IMR-90 (cell line): ENCODE measurements at regions of chr12 and their contacts with region 1.

Region 1: GRCh38 chr12:15268927-15269552 is 47.8 kb upstream of the RERG start:
- DNase-seq: peak; percentile 58
- ATAC-seq: peak; percentile 87
- H3K4me3 ChIP-seq: no peak overlapping the region
- H3K27ac ChIP-seq: no peak overlapping the region
- H3K4me1 ChIP-seq: no peaks in the 10 kb centered on the region
- H3K27me3 ChIP-seq: no peaks in the 10 kb centered on the region
- CTCF ChIP-seq: peak; percentile 76
- POLR2A ChIP-seq: no peak
- RAD21 ChIP-seq: peak; percentile 61; the same call in 1 of the 2 replicates

Region 2: DNA sequence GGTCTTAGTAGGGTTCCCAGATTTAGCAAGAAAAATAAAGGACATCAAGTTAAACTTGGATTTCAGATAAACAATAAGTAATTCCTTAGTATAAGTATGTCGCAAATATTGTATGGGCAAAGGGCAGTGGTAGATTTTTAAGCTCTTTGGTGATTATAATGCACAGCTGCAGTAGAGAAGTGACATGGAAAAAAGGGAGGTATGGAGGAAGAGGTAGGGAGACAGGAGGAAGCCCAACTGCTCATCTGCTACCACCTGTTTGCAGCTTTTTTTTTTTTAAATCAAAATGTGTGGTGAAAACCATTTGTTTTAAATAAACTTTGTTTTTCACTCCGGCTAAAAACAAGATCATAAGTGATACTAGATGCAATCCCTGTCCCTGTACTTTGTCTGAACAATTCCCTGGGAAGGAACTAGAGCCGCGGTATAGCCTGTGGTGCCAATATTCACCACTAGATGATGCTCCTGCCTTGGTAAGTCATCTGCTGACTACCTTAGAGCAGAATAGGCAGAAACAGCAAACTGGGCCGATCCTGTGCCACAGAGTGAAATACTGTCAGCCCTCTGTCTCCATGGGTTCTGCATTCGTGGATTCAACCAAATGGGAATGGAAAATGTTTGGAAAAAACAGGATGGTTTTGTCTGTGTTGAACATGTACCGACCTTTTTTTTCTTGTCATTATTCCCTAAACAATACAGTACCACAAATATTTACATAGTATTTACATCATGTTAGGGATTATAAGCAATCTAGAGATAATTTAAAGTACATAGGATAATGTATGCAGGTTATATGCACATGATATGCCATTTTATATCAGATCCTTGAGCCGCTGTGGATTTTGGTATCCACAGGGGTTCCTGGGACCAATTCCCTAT is 639.0 kb before region 1 on chr12:
- CTCF ChIA-PET with region 1: no interaction called
- POLR2A ChIA-PET with region 1: no interaction called
- dilution Hi-C with region 1: no loop called
- in situ Hi-C with region 1: no loop called
- intact Hi-C with region 1: loop called (anchors 1 kb)
- DNase-seq: peak; percentile 62
- ATAC-seq: peak; percentile 100
- H3K4me3 ChIP-seq: no peak overlapping the region
- H3K27ac ChIP-seq: no peak overlapping the region
- H3K4me1 ChIP-seq: no peaks in the 10 kb centered on the region
- H3K27me3 ChIP-seq: no peaks in the 10 kb centered on the region
- CTCF ChIP-seq: peak; percentile 92
- POLR2A ChIP-seq: no peak
- RAD21 ChIP-seq: peak; percentile 88

Region 3: DNA sequence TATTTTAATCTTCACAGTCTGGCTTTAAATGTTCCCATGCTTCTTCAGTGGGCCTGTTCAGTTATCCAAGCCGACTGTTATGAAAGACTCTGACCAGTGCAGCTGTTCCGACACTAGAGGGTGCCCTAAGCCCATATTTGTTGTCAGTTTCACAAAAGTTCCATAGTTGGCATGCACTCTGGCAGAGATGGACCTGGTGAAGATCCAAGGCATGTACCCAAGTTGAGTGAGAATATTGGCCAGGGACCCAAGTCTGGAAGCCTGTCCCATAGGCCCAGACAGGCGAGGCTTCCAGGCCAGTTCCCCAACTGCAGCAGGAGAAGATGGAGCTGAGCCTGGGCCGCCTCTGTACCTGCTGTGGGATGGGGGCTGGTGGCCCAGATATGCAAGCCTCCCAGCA is 545.3 kb before region 1 on chr12:
- CTCF ChIA-PET with region 1: no interaction called
- POLR2A ChIA-PET with region 1: no interaction called
- dilution Hi-C with region 1: no loop called
- in situ Hi-C with region 1: no loop called
- intact Hi-C with region 1: loop called (anchors 1 kb)
- DNase-seq: peak; percentile 58
- ATAC-seq: peak; percentile 80
- H3K4me3 ChIP-seq: no peak overlapping the region
- H3K27ac ChIP-seq: no peak overlapping the region
- H3K4me1 ChIP-seq: no peaks in the 10 kb centered on the region
- H3K27me3 ChIP-seq: no peaks in the 10 kb centered on the region
- CTCF ChIP-seq: peak; percentile 74
- POLR2A ChIP-seq: no peak
- RAD21 ChIP-seq: peak; percentile 78

Region 4: DNA sequence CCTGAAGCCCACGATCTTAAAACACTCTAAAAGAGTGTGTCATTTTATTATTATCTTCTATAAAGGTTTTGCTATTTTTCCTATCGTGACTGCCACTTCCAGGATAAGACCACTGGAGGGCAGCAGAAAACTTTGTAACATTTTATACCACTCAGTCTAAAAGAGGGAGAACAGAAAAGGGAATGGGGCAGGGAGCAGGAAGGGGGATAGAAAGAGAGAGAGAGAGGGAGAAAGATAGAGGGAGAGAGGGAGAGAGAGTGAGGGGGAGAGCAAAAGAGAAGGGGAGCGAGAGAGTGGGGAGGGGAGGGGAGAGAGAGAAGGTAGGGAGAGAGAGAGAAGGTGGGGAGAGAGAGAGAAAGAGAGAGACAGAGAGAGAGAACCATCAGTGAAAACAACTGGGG is 423.7 kb before region 1 on chr12:
- CTCF ChIA-PET with region 1: no interaction called
- POLR2A ChIA-PET with region 1: no interaction called
- dilution Hi-C with region 1: no loop called
- in situ Hi-C with region 1: no loop called
- intact Hi-C with region 1: loop called (anchors 5 kb)
- DNase-seq: peak; percentile 65
- ATAC-seq: peak; percentile 77
- H3K4me3 ChIP-seq: no peak overlapping the region
- H3K27ac ChIP-seq: no peak overlapping the region; the same call in 1 of the 2 replicates
- H3K4me1 ChIP-seq: peaks cover 3% of the 10 kb centered on the region; the same call in 1 of the 2 replicates
- H3K27me3 ChIP-seq: no peaks in the 10 kb centered on the region
- CTCF ChIP-seq: peak; percentile 85
- POLR2A ChIP-seq: no peak
- RAD21 ChIP-seq: peak; percentile 81

Region 5: GRCh38 chr12:15151161-15152120 is 117.6 kb before region 1 on chr12:
- CTCF ChIA-PET with region 1: no interaction called
- POLR2A ChIA-PET with region 1: no interaction called
- dilution Hi-C with region 1: no loop called
- in situ Hi-C with region 1: no loop called
- intact Hi-C with region 1: loop called (anchors 2 kb)
- DNase-seq: no peak
- ATAC-seq: no peak
- H3K4me3 ChIP-seq: no peak overlapping the region
- H3K27ac ChIP-seq: no peak overlapping the region
- H3K4me1 ChIP-seq: no peaks in the 10 kb centered on the region
- H3K27me3 ChIP-seq: no peaks in the 10 kb centered on the region; the same call in 1 of the 2 replicates
- CTCF ChIP-seq: peak; percentile 31
- POLR2A ChIP-seq: no peak
- RAD21 ChIP-seq: no peak

Region 6: GRCh38 chr12:15227004-15227679 is 41.9 kb before region 1 on chr12:
- CTCF ChIA-PET with region 1: interaction called, 4 read pairs
- POLR2A ChIA-PET with region 1: no interaction called
- dilution Hi-C with region 1: no loop called
- in situ Hi-C with region 1: no loop called
- intact Hi-C with region 1: loop called (anchors 2 kb)
- DNase-seq: peak; percentile 33
- ATAC-seq: peak; percentile 81
- H3K4me3 ChIP-seq: no peak overlapping the region
- H3K27ac ChIP-seq: no peak overlapping the region
- H3K4me1 ChIP-seq: no peaks in the 10 kb centered on the region
- H3K27me3 ChIP-seq: peaks cover 2% of the 10 kb centered on the region; the same call in 1 of the 2 replicates
- CTCF ChIP-seq: peak; percentile 49
- POLR2A ChIP-seq: no peak
- RAD21 ChIP-seq: peak; percentile 33

Region 7: GRCh38 chr12:15306605-15307004 is 37.6 kb after region 1 on chr12:
- CTCF ChIA-PET with region 1: no interaction called
- POLR2A ChIA-PET with region 1: no interaction called
- dilution Hi-C with region 1: no loop called
- in situ Hi-C with region 1: no loop called
- intact Hi-C with region 1: no loop called
- DNase-seq: no peak
- ATAC-seq: no peak
- H3K4me3 ChIP-seq: no peak overlapping the region
- H3K27ac ChIP-seq: no peak overlapping the region
- H3K4me1 ChIP-seq: no peaks in the 10 kb centered on the region
- H3K27me3 ChIP-seq: no peaks in the 10 kb centered on the region
- CTCF ChIP-seq: no peak
- POLR2A ChIP-seq: no peak
- RAD21 ChIP-seq: no peak

Region 8: GRCh38 chr12:15584366-15585041 is 315.5 kb after region 1 on chr12:
- CTCF ChIA-PET with region 1: interaction called, 3 read pairs
- POLR2A ChIA-PET with region 1: no interaction called
- dilution Hi-C with region 1: no loop called
- in situ Hi-C with region 1: loop called (anchors 5 kb)
- intact Hi-C with region 1: loop called (anchors 1 kb)
- DNase-seq: peak; percentile 83
- ATAC-seq: peak; percentile 81
- H3K4me3 ChIP-seq: no peak overlapping the region
- H3K27ac ChIP-seq: no peak overlapping the region
- H3K4me1 ChIP-seq: peaks cover 2% of the 10 kb centered on the region; the same call in 1 of the 2 replicates
- H3K27me3 ChIP-seq: peaks cover 2% of the 10 kb centered on the region; the same call in 1 of the 2 replicates
- CTCF ChIP-seq: peak; percentile 90
- POLR2A ChIP-seq: no peak
- RAD21 ChIP-seq: peak; percentile 86

Region 9: DNA sequence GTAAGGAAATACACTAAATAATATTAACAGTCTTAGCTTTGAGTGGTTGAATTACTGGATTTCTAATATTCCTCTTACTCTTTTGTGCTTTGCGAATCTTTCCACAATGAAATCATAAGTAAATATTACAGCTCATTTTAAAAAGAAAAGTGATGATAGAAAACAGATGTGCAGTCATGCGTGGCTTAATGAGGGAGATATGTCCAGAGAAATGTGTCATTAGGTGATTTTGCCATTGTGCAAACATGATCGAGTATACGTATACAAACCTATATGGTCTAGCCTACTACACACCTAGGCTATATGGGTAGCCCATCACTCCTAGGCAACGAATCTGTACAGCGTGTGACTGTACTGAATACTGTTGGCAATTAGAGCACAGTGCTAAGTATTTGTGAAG is 949.2 kb after region 1 on chr12:
- CTCF ChIA-PET with region 1: no interaction called
- POLR2A ChIA-PET with region 1: no interaction called
- dilution Hi-C with region 1: no loop called
- in situ Hi-C with region 1: no loop called
- intact Hi-C with region 1: no loop called
- DNase-seq: no peak
- ATAC-seq: no peak
- H3K4me3 ChIP-seq: no peak overlapping the region
- H3K27ac ChIP-seq: no peak overlapping the region
- H3K4me1 ChIP-seq: no peaks in the 10 kb centered on the region
- H3K27me3 ChIP-seq: no peaks in the 10 kb centered on the region
- CTCF ChIP-seq: no peak
- POLR2A ChIP-seq: no peak
- RAD21 ChIP-seq: no peak